Sigmoid colon (tissue), 7 donors: ENCODE measurements at regions of chr9 and their contacts with region 1.

Region 1: GRCh38 chr9:68844631-68845612 is 139.9 kb downstream of the PIP5K1B start:
- DNase-seq: no peak
- H3K4me3 ChIP-seq: no peak overlapping the region
- H3K27ac ChIP-seq: no peak overlapping the region
- H3K4me1 ChIP-seq: peaks cover 0 to 22% (median 14%) of the 10 kb centered on the region in 4 donors
- H3K27me3 ChIP-seq: no peaks in the 10 kb centered on the region
- CTCF ChIP-seq: peak in 1 of 4 experiments; percentile 37
- EP300 ChIP-seq: no peak
- POLR2A ChIP-seq: no peak

Region 2: GRCh38 chr9:68793605-68794343 is 51.1 kb before region 1 on chr9:
- intact Hi-C with region 1: loop called (anchors 5 kb)
- DNase-seq: no peak
- H3K4me3 ChIP-seq: no peak overlapping the region
- H3K27ac ChIP-seq: no peak overlapping the region
- H3K4me1 ChIP-seq: no peaks in the 10 kb centered on the region
- H3K27me3 ChIP-seq: no peaks in the 10 kb centered on the region
- CTCF ChIP-seq: no peak
- EP300 ChIP-seq: no peak
- POLR2A ChIP-seq: no peak

Region 3: GRCh38 chr9:68804911-68805889 is 39.7 kb before region 1 on chr9:
- intact Hi-C with region 1: loop called (anchors 5 kb)
- DNase-seq: no peak
- H3K4me3 ChIP-seq: no peak overlapping the region
- H3K27ac ChIP-seq: peak overlapping the region in 3 of 4 donors; percentile 73 to 79 (median 75)
- H3K4me1 ChIP-seq: peaks cover 0 to 46% (median 38%) of the 10 kb centered on the region in 4 donors
- H3K27me3 ChIP-seq: no peaks in the 10 kb centered on the region
- CTCF ChIP-seq: no peak
- EP300 ChIP-seq: no peak
- POLR2A ChIP-seq: no peak

Region 4: GRCh38 chr9:68905129-68905528 is 60.2 kb after region 1 on chr9:
- intact Hi-C with region 1: no loop called
- DNase-seq: no peak
- H3K4me3 ChIP-seq: no peak overlapping the region
- H3K27ac ChIP-seq: no peak overlapping the region
- H3K4me1 ChIP-seq: no peaks in the 10 kb centered on the region
- H3K27me3 ChIP-seq: no peaks in the 10 kb centered on the region
- CTCF ChIP-seq: no peak
- EP300 ChIP-seq: no peak
- POLR2A ChIP-seq: no peak